ENCODE measurements at regions of chr16 and their contacts with region 1.

Region 1: GRCh38 chr16:56263711-56264608 is 72.7 kb downstream of the GNAO1 start:
- DNase-seq: no peak
- ATAC-seq: no peak
- H3K4me3 ChIP-seq: no peak overlapping the region
- H3K27ac ChIP-seq: no peak overlapping the region
- H3K4me1 ChIP-seq: no peaks in the 10 kb centered on the region
- H3K27me3 ChIP-seq: peaks cover 5% of the 10 kb centered on the region in 2 experiments; a peak in 1 of 4 replicates
- CTCF ChIP-seq: no peak
- EP300 ChIP-seq: no peak
- POLR2A ChIP-seq: no peak
- RAD21 ChIP-seq: no peak

Region 2: GRCh38 chr16:56204816-56205215 is 59.1 kb before region 1 on chr16:
- CTCF ChIA-PET with region 1: no interaction called
- POLR2A ChIA-PET with region 1: no interaction called
- RAD21 ChIA-PET with region 1: no interaction called
- SMC1A ChIA-PET with region 1: no interaction called
- in situ Hi-C with region 1: no loop called
- intact Hi-C with region 1: no loop called
- DNase-seq: no peak
- ATAC-seq: no peak
- H3K4me3 ChIP-seq: no peak overlapping the region
- H3K27ac ChIP-seq: no peak overlapping the region
- H3K4me1 ChIP-seq: peaks cover 7% of the 10 kb centered on the region; the same call in 1 of the 2 replicates
- H3K27me3 ChIP-seq: no peaks in the 10 kb centered on the region; a peak in 1 of 4 replicates
- CTCF ChIP-seq: no peak
- EP300 ChIP-seq: no peak
- POLR2A ChIP-seq: no peak
- RAD21 ChIP-seq: no peak

Region 3: GRCh38 chr16:56293989-56294388 is 30.0 kb after region 1 on chr16:
- CTCF ChIA-PET with region 1: no interaction called
- POLR2A ChIA-PET with region 1: no interaction called
- RAD21 ChIA-PET with region 1: no interaction called
- SMC1A ChIA-PET with region 1: no interaction called
- in situ Hi-C with region 1: no loop called
- intact Hi-C with region 1: loop called (anchors 1 kb)
- DNase-seq: no peak
- ATAC-seq: no peak
- H3K4me3 ChIP-seq: no peak overlapping the region
- H3K27ac ChIP-seq: no peak overlapping the region
- H3K4me1 ChIP-seq: no peaks in the 10 kb centered on the region
- H3K27me3 ChIP-seq: no peaks in the 10 kb centered on the region; a peak in 2 of 4 replicates
- CTCF ChIP-seq: no peak
- EP300 ChIP-seq: no peak
- POLR2A ChIP-seq: no peak
- RAD21 ChIP-seq: no peak

Measured in GM12878 (cell line).